ENCODE measurements at regions of chr1 and their contacts with region 1.

Region 1: GRCh38 chr1:59556802-59557548 is 257.8 kb upstream of the HOOK1 start:
- DNase-seq: peak; percentile 100
- ATAC-seq: peak; percentile 95
- H3K4me3 ChIP-seq: no peak overlapping the region
- H3K27ac ChIP-seq: peak overlapping the region; percentile 74
- H3K4me1 ChIP-seq: peaks cover 76% of the 10 kb centered on the region
- H3K27me3 ChIP-seq: no peaks in the 10 kb centered on the region
- CTCF ChIP-seq: no peak
- EP300 ChIP-seq: peak; percentile 96 to 99; a peak in 3 of 4 replicates
- POLR2A ChIP-seq: no peak
- RAD21 ChIP-seq: 0 out of 2 replicates have a peak, but pooled peaks have one; percentile 8

Region 2: DNA sequence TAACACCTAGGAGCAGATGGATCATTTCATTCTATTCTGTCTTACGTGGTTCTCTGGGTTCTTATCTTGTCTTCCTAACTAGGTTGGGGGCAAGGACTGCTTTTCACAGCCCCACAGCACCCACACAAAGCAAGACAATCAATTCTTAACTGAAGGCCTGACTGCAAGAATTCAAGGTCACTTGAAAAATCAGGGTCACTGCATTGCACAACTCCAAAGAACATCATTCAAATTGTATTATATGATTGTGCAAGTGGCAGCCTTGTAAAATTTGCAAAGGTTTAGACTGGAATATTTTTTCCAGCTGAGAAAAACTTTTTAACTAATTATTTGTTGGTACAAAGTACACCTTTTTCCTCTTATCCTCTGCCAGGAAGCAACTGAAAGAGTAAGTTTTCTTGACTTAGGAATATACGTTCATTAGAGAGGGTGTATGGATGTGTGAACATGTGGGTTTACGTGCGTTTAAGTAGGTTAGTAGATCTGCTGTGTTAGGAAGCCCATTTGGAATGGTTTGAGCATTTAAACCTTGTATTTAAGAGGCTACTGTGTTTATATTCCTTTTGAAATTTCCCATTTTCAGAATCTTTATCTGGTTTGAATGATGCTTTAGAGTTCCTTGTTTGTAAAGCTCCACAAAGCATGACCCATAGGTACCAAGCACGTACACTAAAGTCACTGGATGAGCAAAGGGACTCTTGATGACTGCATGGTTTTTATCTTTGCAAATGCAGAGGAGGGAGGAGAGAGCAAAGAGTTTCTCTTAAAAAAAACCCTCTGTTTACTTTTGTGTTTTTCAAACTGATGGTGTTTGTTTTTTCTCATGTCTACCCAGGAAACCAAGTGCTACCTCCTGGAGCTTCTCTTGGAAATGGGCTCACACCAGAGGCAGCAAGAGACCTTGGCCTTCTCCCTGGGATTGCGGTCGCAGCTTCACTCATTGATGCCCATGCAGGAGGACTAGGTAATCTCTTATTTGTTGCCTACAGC is 45.2 kb before region 1 on chr1:
- CTCF ChIA-PET with region 1: no interaction called
- POLR2A ChIA-PET with region 1: interaction called, 4 read pairs
- in situ Hi-C with region 1: no loop called
- intact Hi-C with region 1: loop called (anchors 5 kb)
- DNase-seq: peak; percentile 82
- ATAC-seq: peak; percentile 82
- H3K4me3 ChIP-seq: peak overlapping the region in 2 of 3 experiments; percentile 27 to 30; a peak in 4 of 6 replicates
- H3K27ac ChIP-seq: peak overlapping the region; percentile 82
- H3K4me1 ChIP-seq: peaks cover 93% of the 10 kb centered on the region
- H3K27me3 ChIP-seq: no peaks in the 10 kb centered on the region
- CTCF ChIP-seq: no peak
- EP300 ChIP-seq: peak; percentile 70 to 93; a peak in 3 of 4 replicates
- POLR2A ChIP-seq: no peak
- RAD21 ChIP-seq: no peak; the same call in 1 of the 2 replicates

Region 3: GRCh38 chr1:59543211-59543668 is 13.7 kb before region 1 on chr1:
- CTCF ChIA-PET with region 1: no interaction called
- POLR2A ChIA-PET with region 1: interaction called, 11 read pairs
- in situ Hi-C with region 1: no loop called
- intact Hi-C with region 1: no loop called
- DNase-seq: peak; percentile 59
- ATAC-seq: peak; percentile 93
- H3K4me3 ChIP-seq: peak overlapping the region in 2 of 3 experiments; percentile 4 to 6; a peak in 1 of 6 replicates
- H3K27ac ChIP-seq: peak overlapping the region; percentile 60
- H3K4me1 ChIP-seq: peaks cover 34% of the 10 kb centered on the region
- H3K27me3 ChIP-seq: no peaks in the 10 kb centered on the region
- CTCF ChIP-seq: no peak
- EP300 ChIP-seq: peak in 1 of 2 experiments; percentile 41; a peak in 1 of 4 replicates
- POLR2A ChIP-seq: no peak
- RAD21 ChIP-seq: no peak

Region 4: GRCh38 chr1:59593798-59594790 is 37.1 kb after region 1 on chr1:
- CTCF ChIA-PET with region 1: no interaction called
- POLR2A ChIA-PET with region 1: interaction called, 14 read pairs
- in situ Hi-C with region 1: no loop called
- intact Hi-C with region 1: no loop called
- DNase-seq: peak; percentile 65
- ATAC-seq: peak; percentile 86
- H3K4me3 ChIP-seq: peak overlapping the region in 2 of 3 experiments; percentile 3 to 35; a peak in 2 of 6 replicates
- H3K27ac ChIP-seq: peak overlapping the region; percentile 70
- H3K4me1 ChIP-seq: peaks cover 40% of the 10 kb centered on the region
- H3K27me3 ChIP-seq: no peaks in the 10 kb centered on the region
- CTCF ChIP-seq: no peak
- EP300 ChIP-seq: peak in 1 of 2 experiments; percentile 57; a peak in 2 of 4 replicates
- POLR2A ChIP-seq: no peak
- RAD21 ChIP-seq: no peak